K562 (cell line): ENCODE measurements at regions of chr10 and their contacts with region 1.

Region 1: GRCh38 chr10:3068201-3068967 is 1.0 kb downstream of the PFKP start:
- DNase-seq: peak; percentile 55 to 67 (median 61)
- ATAC-seq: peak; percentile 66
- H3K4me3 ChIP-seq: peak overlapping the region; percentile 85
- H3K27ac ChIP-seq: peak overlapping the region; percentile 80
- H3K4me1 ChIP-seq: peaks cover 33 to 54% of the 10 kb centered on the region in 2 experiments
- H3K27me3 ChIP-seq: peaks cover 0 to 16% of the 10 kb centered on the region in 2 experiments; a peak in 2 of 5 replicates
- CTCF ChIP-seq: peak; percentile 22 to 47 (median 30); a peak in 4 of 6 replicates
- EP300 ChIP-seq: no peak
- POLR2A ChIP-seq: no peak; the same call in 1 of the 2 replicates
- RAD21 ChIP-seq: peak in 1 of 2 experiments; percentile 48; a peak in 2 of 4 replicates

Region 2: GRCh38 chr10:3095373-3096139 is 27.2 kb after region 1 on chr10:
- CTCF ChIA-PET with region 1: no interaction called
- POLR2A ChIA-PET with region 1: interaction called, 12 read pairs
- in situ Hi-C with region 1: no loop called
- intact Hi-C with region 1: loop called (anchors 2 kb)
- DNase-seq: peak; percentile 80 to 92 (median 84)
- ATAC-seq: peak; percentile 92
- H3K4me3 ChIP-seq: peak overlapping the region; percentile 24; the same call in 1 of the 2 replicates
- H3K27ac ChIP-seq: peak overlapping the region; percentile 97
- H3K4me1 ChIP-seq: peaks cover 37 to 43% of the 10 kb centered on the region in 2 experiments
- H3K27me3 ChIP-seq: no peaks in the 10 kb centered on the region
- CTCF ChIP-seq: no peak
- EP300 ChIP-seq: peak; percentile 82
- POLR2A ChIP-seq: peak; percentile 67; the same call in 1 of the 2 replicates
- RAD21 ChIP-seq: no peak; a peak in 1 of 4 replicates

Region 3: GRCh38 chr10:3172446-3173170 is 104.2 kb after region 1 on chr10 and contains the start of gene PITRM1:
- CTCF ChIA-PET with region 1: no interaction called
- POLR2A ChIA-PET with region 1: interaction called, 3 read pairs
- in situ Hi-C with region 1: no loop called
- intact Hi-C with region 1: loop called (anchors 5 kb)
- DNase-seq: peak; percentile 92 to 99 (median 94)
- ATAC-seq: peak; percentile 97
- H3K4me3 ChIP-seq: peak within 1 kb of the TSS; percentile 96
- H3K27ac ChIP-seq: peak within 1 kb of the TSS; percentile 70
- H3K4me1 ChIP-seq: peaks cover 6 to 19% of the 10 kb centered on the region in 2 experiments; a peak in 4 of 5 replicates
- H3K27me3 ChIP-seq: peaks cover 0 to 10% of the 10 kb centered on the region in 2 experiments; a peak in 2 of 5 replicates
- CTCF ChIP-seq: no peak
- EP300 ChIP-seq: no peak
- POLR2A ChIP-seq: peak; percentile 93
- RAD21 ChIP-seq: no peak
- polyA plus RNA-seq, gene PITRM1: 21.1 to 29.2 TPM